Activated CD8-positive, alpha-beta memory T cell treated with anti-CD3 and anti-CD28 coated beads, Interleukin-2, amount 10 ng/mL, durations not matched to agents 7 days and 5 days (primary cell): ENCODE measurements at regions of chr15 and their contacts with region 1.

Region 1: GRCh38 chr15:58980351-58980939 is 7.0 kb upstream of the RNF111 start:
- DNase-seq: no peak
- ATAC-seq: no peak
- H3K4me3 Mint-ChIP-seq: no peak overlapping the region
- H3K27ac Mint-ChIP-seq: peak overlapping the region; percentile 67
- H3K4me1 Mint-ChIP-seq: peaks cover 41% of the 10 kb centered on the region
- H3K27me3 Mint-ChIP-seq: peaks cover 4% of the 10 kb centered on the region

Region 2: GRCh38 chr15:58957101-58957973 is 23.1 kb before region 1 on chr15:
- CTCF ChIA-PET with region 1: interaction called, 15 read pairs
- DNase-seq: peak; percentile 73
- ATAC-seq: peak; percentile 91
- H3K4me3 Mint-ChIP-seq: no peak overlapping the region
- H3K27ac Mint-ChIP-seq: no peak overlapping the region
- H3K4me1 Mint-ChIP-seq: peaks cover 15% of the 10 kb centered on the region
- H3K27me3 Mint-ChIP-seq: no peaks in the 10 kb centered on the region

Region 3: GRCh38 chr15:58999694-59000093 is 19.2 kb after region 1 on chr15:
- CTCF ChIA-PET with region 1: no interaction called
- DNase-seq: no peak
- ATAC-seq: no peak
- H3K4me3 Mint-ChIP-seq: no peak overlapping the region
- H3K27ac Mint-ChIP-seq: no peak overlapping the region
- H3K4me1 Mint-ChIP-seq: peaks cover 18% of the 10 kb centered on the region
- H3K27me3 Mint-ChIP-seq: no peaks in the 10 kb centered on the region